ENCODE measurements at regions of chr12 and their contacts with region 1.

Region 1: GRCh38 chr12:65756956-65757511 is 67.2 kb upstream of the HMGA2 start:
- DNase-seq: peak; percentile 6
- H3K4me3 Mint-ChIP-seq: no peak overlapping the region
- H3K27ac Mint-ChIP-seq: no peak overlapping the region
- H3K4me1 Mint-ChIP-seq: peaks cover 10% of the 10 kb centered on the region
- H3K27me3 Mint-ChIP-seq: peaks cover 16% of the 10 kb centered on the region

Region 2: GRCh38 chr12:65156366-65156841 is 600.6 kb before region 1 on chr12:
- CTCF ChIA-PET with region 1: no interaction called
- intact Hi-C with region 1: loop called (anchors 5 kb)
- DNase-seq: peak; percentile 35
- H3K4me3 Mint-ChIP-seq: peak overlapping the region; percentile 19
- H3K27ac Mint-ChIP-seq: peak overlapping the region; percentile 37
- H3K4me1 Mint-ChIP-seq: peaks cover 16% of the 10 kb centered on the region
- H3K27me3 Mint-ChIP-seq: peaks cover 12% of the 10 kb centered on the region

Region 3: GRCh38 chr12:65695113-65695865 is 61.7 kb before region 1 on chr12:
- CTCF ChIA-PET with region 1: no interaction called
- intact Hi-C with region 1: no loop called
- DNase-seq: no peak
- H3K4me3 Mint-ChIP-seq: no peak overlapping the region
- H3K27ac Mint-ChIP-seq: no peak overlapping the region
- H3K4me1 Mint-ChIP-seq: no peaks in the 10 kb centered on the region
- H3K27me3 Mint-ChIP-seq: peaks cover 14% of the 10 kb centered on the region

Region 4: DNA sequence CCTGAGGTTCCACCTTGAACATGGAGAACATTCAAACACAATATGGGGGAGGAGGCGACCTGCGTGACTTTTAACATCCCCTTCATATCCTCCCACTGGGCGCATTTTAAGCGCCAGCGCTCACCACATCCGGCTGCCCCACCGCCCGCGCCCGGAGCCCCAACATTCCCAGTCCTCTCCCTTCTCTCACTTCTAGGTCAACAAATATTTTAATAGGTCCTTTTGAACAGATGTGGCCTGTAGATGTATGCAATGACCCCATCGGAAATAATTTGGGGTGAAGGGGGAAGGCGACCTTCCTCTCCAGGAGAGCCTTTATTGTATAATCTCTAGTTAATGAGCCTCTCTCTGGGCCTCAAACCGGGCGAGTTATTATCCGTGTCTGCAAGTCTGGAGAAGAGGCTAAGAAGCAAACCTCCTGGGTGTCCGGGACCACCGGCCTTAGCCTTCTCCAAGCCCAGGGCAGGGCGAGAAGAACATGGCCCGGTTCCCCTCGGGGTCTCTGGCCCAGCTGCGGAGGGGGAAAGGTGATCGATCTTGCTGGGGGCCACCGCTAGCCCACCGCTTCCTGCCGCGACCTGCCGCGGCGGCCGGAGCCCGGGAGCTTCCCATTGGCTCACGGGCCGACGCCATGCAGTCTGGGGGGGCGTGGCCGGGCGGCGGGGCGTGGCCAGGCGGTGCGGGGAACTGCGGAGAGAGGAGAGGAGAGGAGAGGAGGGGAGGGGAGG is 16.0 kb before region 1 on chr12:
- CTCF ChIA-PET with region 1: no interaction called
- intact Hi-C with region 1: loop called (anchors 2 kb)
- DNase-seq: peak; percentile 70
- H3K4me3 Mint-ChIP-seq: peak overlapping the region; percentile 62
- H3K27ac Mint-ChIP-seq: no peak overlapping the region
- H3K4me1 Mint-ChIP-seq: peaks cover 11% of the 10 kb centered on the region
- H3K27me3 Mint-ChIP-seq: peaks cover 25% of the 10 kb centered on the region

Region 5: DNA sequence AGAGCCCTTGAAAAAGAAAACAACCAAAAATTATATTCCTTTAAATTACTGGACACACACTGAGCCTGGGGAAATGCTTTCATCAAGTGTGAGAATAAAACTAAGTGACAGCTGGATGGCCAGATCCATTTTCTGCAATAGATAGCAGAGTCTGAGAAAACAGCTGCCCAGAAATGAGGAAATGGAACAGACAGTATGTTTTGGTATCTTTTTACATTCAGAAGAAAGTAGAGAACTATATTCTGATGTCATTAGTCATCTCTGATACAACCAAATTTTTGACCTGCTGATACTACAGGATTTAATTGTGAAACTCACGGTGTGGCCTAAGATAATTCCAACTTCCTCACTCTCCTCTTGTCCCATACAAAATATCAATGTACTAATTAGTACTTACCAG is 145.5 kb after region 1 on chr12:
- CTCF ChIA-PET with region 1: no interaction called
- intact Hi-C with region 1: no loop called
- DNase-seq: no peak
- H3K4me3 Mint-ChIP-seq: no peak overlapping the region
- H3K27ac Mint-ChIP-seq: no peak overlapping the region
- H3K4me1 Mint-ChIP-seq: no peaks in the 10 kb centered on the region
- H3K27me3 Mint-ChIP-seq: peaks cover 17% of the 10 kb centered on the region

Measured in activated naive CD4-positive, alpha-beta T cell treated with anti-CD3 and anti-CD28 coated beads for 36 hours (primary cell).